ENCODE measurements at regions of chr22 and their contacts with region 1.

Region 1: DNA sequence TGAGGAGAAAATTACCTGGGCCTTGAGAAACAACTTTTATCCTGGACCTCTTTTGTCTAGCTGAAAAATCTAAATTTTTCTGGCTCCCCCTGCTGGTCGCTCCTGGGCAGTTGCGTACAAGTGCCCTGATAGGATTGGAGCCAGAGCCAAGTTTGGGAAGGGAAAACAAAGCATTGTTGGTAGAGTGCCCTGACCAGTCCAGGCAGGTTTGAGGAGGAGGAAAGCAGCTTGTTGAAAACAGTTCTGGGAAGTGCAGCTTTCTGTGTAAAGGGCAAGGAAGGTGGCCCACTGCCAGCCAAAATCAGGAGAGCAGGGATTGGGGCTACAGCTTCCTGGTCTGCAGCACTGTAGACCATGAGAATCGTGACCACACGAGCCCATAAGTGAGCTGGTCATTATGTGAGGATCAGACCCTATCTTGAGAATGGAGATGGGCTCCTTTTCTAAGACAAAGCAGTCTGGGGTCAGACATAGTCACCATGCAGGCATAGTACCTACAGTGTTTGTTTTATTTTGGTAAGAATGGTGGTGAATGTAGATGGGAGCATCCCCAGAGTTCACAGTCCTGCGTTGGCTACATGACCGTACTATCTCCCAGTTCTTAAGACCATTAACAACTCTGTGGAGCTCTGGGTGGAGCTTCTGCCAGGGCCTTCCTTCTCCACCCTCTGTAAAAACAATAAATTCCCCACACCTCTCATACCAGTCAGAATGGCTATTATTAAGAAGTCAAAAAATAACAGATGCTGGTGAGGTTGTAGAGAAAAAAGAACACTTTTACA is 21.3 kb upstream of the PIK3IP1 start:
- DNase-seq: peak; percentile 59 to 85
- ATAC-seq: peak; percentile 91 to 97 (median 95)
- H3K4me3 ChIP-seq: no peak overlapping the region
- H3K27ac ChIP-seq: peak overlapping the region in 8 of 10 donors; percentile 51 to 72 (median 57)
- H3K4me1 ChIP-seq: peaks cover 0 to 13% (median 11%) of the 10 kb centered on the region in 9 donors
- H3K27me3 ChIP-seq: no peaks in the 10 kb centered on the region
- CTCF ChIP-seq: peak; percentile 83 to 91 (median 89)

Region 2: GRCh38 chr22:31290494-31291471 is 22.8 kb before region 1 on chr22:
- intact Hi-C with region 1: loop called in 2 of 10 experiments (anchors 1 to 2 kb)
- DNase-seq: peak; percentile 94 to 96
- ATAC-seq: peak; percentile 93 to 96 (median 94)
- H3K4me3 ChIP-seq: peak overlapping the region; percentile 42 to 89 (median 78)
- H3K27ac ChIP-seq: peak overlapping the region; percentile 93 to 99 (median 95)
- H3K4me1 ChIP-seq: peaks cover 18 to 89% (median 52%) of the 10 kb centered on the region in 9 donors
- H3K27me3 ChIP-seq: no peaks in the 10 kb centered on the region
- CTCF ChIP-seq: no peak

Region 3: GRCh38 chr22:31363885-31364465 is 50.4 kb after region 1 on chr22:
- intact Hi-C with region 1: no loop called
- DNase-seq: no peak
- ATAC-seq: no peak
- H3K4me3 ChIP-seq: no peak overlapping the region
- H3K27ac ChIP-seq: no peak overlapping the region
- H3K4me1 ChIP-seq: no peaks in the 10 kb centered on the region
- H3K27me3 ChIP-seq: no peaks in the 10 kb centered on the region
- CTCF ChIP-seq: no peak

Measured in heart right ventricle (tissue), 16 donors.